Activated T-helper 2 cell treated with anti-CD3 and anti-CD28 coated beads, Interferon-gamma antibody, Interleukin-2, Interleukin-4, amounts not matched to agents 10 μg/mL and 5 μg/mL and 100 μg/mL, durations not matched to agents 14 hours and 24 hours and 36 hours (primary cell): ENCODE measurements at regions of chr1 and their contacts with region 1.

Region 1: DNA sequence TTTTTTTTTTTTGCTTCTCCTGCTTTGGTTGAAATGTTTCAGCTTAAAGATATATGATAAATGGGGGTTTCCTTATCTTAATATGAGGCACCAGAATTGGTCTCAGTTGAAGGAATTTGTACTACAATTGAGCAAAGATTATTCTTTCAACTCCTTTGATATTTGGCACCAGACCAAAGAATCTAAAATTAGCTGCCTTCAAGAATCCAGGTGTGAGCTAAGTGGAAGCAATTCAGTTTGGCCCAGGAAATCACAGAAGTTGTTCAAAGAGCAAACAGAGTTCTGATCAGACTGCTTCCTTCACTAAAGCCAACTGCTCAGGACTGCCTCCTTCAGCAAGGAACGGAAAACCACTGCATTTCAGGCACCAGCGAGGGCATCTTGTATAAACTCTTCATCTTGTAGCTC is 68.3 kb upstream of the BCAR3 start:
- DNase-seq: no peak
- H3K4me3 Mint-ChIP-seq: no peak overlapping the region
- H3K27ac Mint-ChIP-seq: peak overlapping the region; percentile 25
- H3K4me1 Mint-ChIP-seq: peaks cover 53% of the 10 kb centered on the region
- H3K27me3 Mint-ChIP-seq: no peaks in the 10 kb centered on the region

Region 2: GRCh38 chr1:93537924-93538323 is 212.0 kb before region 1 on chr1:
- intact Hi-C with region 1: no loop called
- DNase-seq: no peak
- H3K4me3 Mint-ChIP-seq: no peak overlapping the region
- H3K27ac Mint-ChIP-seq: no peak overlapping the region
- H3K4me1 Mint-ChIP-seq: peaks cover 2% of the 10 kb centered on the region
- H3K27me3 Mint-ChIP-seq: peaks cover 21% of the 10 kb centered on the region

Region 3: GRCh38 chr1:93764042-93764750 is 14.3 kb after region 1 on chr1:
- intact Hi-C with region 1: loop called (anchors 2 kb)
- DNase-seq: no peak
- H3K4me3 Mint-ChIP-seq: no peak overlapping the region
- H3K27ac Mint-ChIP-seq: no peak overlapping the region
- H3K4me1 Mint-ChIP-seq: peaks cover 57% of the 10 kb centered on the region
- H3K27me3 Mint-ChIP-seq: no peaks in the 10 kb centered on the region